Activated B cell treated with CpG ODN at 0.5 μM for 24 hours (primary cell): ENCODE measurements at regions of chr4 and their contacts with region 1.

Region 1: GRCh38 chr4:169566021-169566818 is 46.2 kb downstream of the NEK1 start:
- DNase-seq: no peak
- ATAC-seq: peak; percentile 40
- H3K4me3 Mint-ChIP-seq: no peak overlapping the region
- H3K27ac Mint-ChIP-seq: no peak overlapping the region
- H3K4me1 Mint-ChIP-seq: peaks cover 7% of the 10 kb centered on the region
- H3K27me3 Mint-ChIP-seq: no peaks in the 10 kb centered on the region
- CTCF ChIP-seq: peak; percentile 83

Region 2: DNA sequence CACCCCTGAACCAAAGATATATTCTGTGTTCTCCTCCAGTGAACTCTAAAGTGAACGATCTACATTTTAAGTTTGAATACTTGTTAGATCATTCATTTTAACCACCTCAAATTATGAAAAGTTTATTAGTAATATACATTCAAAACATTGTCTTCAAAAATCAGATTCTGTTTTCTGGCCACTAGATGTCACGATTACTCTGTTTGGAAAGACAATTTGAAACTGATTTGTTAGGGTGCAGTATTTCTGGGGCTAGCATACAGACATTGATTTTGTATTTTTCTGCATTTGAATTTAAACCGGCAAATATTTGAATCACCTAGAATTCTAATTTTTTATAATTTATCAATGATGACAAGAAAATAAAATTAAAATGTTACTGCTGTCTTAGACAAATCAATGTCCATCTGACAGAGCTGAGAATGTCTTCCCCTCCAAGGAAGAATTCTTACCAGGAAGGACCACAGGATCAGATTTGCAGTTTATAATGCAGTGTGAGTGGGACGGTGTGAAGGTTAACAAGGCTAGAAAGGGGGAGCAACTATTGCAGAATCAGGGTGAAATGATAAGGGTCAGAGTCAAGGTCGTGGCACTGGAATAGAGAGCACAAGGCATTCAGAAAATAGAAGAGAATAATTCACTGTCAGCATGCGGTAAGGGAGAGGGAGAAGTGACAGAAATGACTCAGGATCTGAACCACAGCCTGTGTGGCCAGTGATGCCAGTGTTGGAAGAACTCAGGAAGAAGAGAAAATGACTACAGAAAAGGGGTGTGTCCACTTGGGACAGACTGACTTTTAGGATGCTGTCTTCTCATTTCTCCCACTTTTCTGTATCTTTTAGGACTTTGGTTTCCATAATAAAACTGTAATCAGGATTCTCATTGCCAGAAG is 1382.3 kb before region 1 on chr4:
- CTCF ChIA-PET with region 1: no interaction called
- POLR2A ChIA-PET with region 1: no interaction called
- intact Hi-C with region 1: loop called (anchors 1 kb)
- DNase-seq: no peak
- ATAC-seq: no peak
- H3K4me3 Mint-ChIP-seq: no peak overlapping the region
- H3K27ac Mint-ChIP-seq: no peak overlapping the region
- H3K4me1 Mint-ChIP-seq: peaks cover 6% of the 10 kb centered on the region
- H3K27me3 Mint-ChIP-seq: no peaks in the 10 kb centered on the region
- CTCF ChIP-seq: no peak

Region 3: DNA sequence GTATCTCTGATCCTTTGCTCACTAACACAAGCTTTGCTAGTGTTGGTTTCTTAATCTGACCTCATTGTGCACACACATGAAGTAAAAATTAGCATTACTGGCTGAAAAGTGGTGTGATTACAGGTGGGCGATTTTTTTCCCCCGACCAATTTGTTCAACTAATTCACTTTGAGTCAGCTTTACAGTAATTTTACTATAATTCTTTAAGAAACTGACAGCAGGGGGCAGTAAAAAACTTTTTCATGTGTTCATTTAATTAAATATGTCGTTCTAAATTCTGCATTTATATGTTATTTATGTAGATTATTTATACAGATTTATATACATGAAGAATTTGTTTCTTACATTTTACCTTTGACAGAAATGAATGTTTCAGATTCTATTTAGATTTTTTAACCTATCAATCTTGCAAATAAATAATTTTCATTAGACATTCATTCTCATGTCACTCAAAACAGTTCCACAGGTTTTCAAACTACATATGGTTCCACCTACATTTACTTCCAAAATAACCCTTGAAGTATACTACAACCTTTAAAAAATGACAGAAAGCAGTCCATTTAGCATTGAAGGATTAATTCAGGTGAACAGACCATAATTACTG is 1051.9 kb before region 1 on chr4:
- CTCF ChIA-PET with region 1: interaction called, 5 read pairs
- POLR2A ChIA-PET with region 1: no interaction called
- intact Hi-C with region 1: loop called (anchors 1 kb)
- DNase-seq: no peak
- ATAC-seq: no peak
- H3K4me3 Mint-ChIP-seq: no peak overlapping the region
- H3K27ac Mint-ChIP-seq: no peak overlapping the region
- H3K4me1 Mint-ChIP-seq: no peaks in the 10 kb centered on the region
- H3K27me3 Mint-ChIP-seq: peaks cover 2% of the 10 kb centered on the region
- CTCF ChIP-seq: no peak

Region 4: DNA sequence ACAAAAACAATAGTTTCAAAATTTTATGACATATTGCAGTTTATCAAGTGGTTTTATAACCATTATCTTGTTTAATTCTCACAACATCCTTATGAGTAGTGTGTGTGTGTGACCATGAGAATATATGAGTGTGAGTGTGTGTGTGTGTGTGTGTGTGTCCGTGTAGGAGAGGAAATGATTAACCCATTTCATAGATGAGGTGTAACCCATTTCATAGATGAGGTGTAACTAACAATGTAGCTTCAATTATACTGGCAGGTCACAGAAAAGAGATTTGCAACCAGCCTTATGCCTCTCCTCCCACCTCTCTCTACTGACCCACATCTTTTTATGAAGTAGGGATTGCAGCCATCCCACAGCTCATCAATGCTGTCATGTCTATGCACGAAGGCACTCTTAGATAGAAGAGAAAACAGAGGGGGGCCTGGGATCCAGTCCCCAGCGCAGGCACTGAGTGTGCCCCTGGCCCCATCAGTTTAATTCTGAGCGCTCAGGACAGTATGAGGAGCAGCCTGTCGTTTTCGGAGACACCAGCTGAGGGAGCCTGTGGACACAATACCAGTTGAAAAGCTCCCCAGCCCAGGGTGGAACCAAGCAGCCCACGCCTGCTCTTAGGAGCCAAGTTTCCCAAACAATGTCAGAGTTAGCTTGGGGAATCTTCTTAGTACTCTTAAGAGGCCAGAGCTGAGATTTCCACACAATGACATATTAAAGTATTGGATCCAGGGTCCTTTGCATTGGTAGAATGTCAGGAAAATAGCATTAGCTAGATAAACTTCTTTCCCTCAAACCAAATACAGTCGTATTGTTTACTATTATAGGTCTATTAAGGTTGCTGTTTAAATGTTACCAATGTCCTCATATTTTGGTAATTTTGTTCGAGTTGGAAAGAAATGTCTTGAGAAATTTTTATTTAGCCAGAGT is 980.8 kb before region 1 on chr4:
- CTCF ChIA-PET with region 1: no interaction called
- POLR2A ChIA-PET with region 1: no interaction called
- intact Hi-C with region 1: loop called (anchors 2 kb)
- DNase-seq: no peak
- ATAC-seq: no peak
- H3K4me3 Mint-ChIP-seq: no peak overlapping the region
- H3K27ac Mint-ChIP-seq: no peak overlapping the region
- H3K4me1 Mint-ChIP-seq: no peaks in the 10 kb centered on the region
- H3K27me3 Mint-ChIP-seq: peaks cover 14% of the 10 kb centered on the region
- CTCF ChIP-seq: no peak

Region 5: DNA sequence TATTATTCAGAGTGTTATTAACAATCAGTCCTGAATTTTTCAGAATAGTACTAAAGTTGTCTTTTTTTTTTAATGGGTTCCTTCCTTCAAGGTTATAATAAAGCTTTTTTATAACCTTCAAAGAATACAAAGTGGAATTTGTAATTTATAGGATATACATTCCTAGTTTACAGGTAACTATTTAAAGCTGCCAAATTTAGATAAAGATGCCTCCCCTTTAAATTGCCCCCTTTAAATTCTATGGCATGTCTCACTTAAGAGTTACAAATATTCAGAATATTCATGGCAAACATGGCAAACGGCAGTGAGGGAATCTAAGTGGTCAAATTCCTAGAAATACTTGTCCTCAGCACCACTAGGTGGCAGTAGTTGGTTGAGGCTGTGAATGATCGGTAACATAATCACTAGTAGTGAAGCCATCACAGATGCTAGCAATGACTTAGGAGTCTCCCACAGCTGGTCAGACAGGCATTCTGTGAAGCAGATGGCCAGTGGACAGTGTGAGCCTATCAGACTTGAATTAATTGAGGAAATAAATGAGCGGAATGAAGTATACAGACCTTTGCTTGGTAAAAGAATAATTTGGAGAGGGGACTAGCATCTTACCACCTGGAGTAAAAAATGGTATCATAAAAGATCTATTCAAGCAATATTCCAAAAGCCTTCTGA is 642.6 kb before region 1 on chr4:
- CTCF ChIA-PET with region 1: interaction called, 39 read pairs
- POLR2A ChIA-PET with region 1: no interaction called
- intact Hi-C with region 1: loop called (anchors 1 kb)
- DNase-seq: no peak
- ATAC-seq: peak; percentile 54
- H3K4me3 Mint-ChIP-seq: no peak overlapping the region
- H3K27ac Mint-ChIP-seq: no peak overlapping the region
- H3K4me1 Mint-ChIP-seq: no peaks in the 10 kb centered on the region
- H3K27me3 Mint-ChIP-seq: no peaks in the 10 kb centered on the region
- CTCF ChIP-seq: peak; percentile 61

Region 6: GRCh38 chr4:168995537-168996295 is 570.5 kb before region 1 on chr4:
- CTCF ChIA-PET with region 1: no interaction called
- POLR2A ChIA-PET with region 1: no interaction called
- intact Hi-C with region 1: loop called (anchors 5 kb)
- DNase-seq: no peak
- ATAC-seq: no peak
- H3K4me3 Mint-ChIP-seq: no peak overlapping the region
- H3K27ac Mint-ChIP-seq: no peak overlapping the region
- H3K4me1 Mint-ChIP-seq: peaks cover 2% of the 10 kb centered on the region
- H3K27me3 Mint-ChIP-seq: no peaks in the 10 kb centered on the region
- CTCF ChIP-seq: no peak

Region 7: GRCh38 chr4:169024762-169025161 is 541.5 kb before region 1 on chr4:
- CTCF ChIA-PET with region 1: no interaction called
- POLR2A ChIA-PET with region 1: no interaction called
- intact Hi-C with region 1: loop called (anchors 1 kb)
- DNase-seq: no peak
- ATAC-seq: peak; percentile 50
- H3K4me3 Mint-ChIP-seq: no peak overlapping the region
- H3K27ac Mint-ChIP-seq: no peak overlapping the region
- H3K4me1 Mint-ChIP-seq: no peaks in the 10 kb centered on the region
- H3K27me3 Mint-ChIP-seq: peaks cover 3% of the 10 kb centered on the region
- CTCF ChIP-seq: no peak

Region 8: DNA sequence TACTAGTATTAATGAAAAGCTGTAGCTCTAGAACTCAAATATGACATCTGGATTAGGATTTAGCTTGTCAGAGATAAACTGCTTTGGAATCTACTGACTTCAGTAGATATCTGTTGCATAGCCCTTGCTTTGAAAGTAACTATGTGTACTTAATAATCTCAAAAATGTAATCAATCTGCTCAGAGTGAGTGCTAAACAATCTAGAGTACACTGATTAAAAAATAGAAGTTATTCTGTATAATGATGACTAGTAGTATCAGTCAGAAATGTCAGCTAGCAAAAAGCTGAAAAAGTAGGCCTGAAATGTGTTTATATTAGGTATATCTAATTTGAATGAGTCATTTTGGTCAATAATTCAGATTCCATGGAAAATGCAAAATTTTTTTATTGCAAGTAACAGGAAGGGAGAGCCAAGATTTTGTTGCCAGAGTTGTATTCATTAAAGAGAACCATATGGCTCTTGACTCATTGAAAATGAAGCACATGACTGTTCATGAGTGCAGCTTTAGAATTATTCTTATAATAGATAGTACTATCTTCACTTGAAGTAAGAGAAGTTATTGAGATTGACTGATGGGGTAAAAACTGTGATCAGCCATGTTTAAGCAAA is 74.1 kb after region 1 on chr4:
- CTCF ChIA-PET with region 1: no interaction called
- POLR2A ChIA-PET with region 1: no interaction called
- intact Hi-C with region 1: no loop called
- DNase-seq: no peak
- ATAC-seq: no peak
- H3K4me3 Mint-ChIP-seq: no peak overlapping the region
- H3K27ac Mint-ChIP-seq: no peak overlapping the region
- H3K4me1 Mint-ChIP-seq: no peaks in the 10 kb centered on the region
- H3K27me3 Mint-ChIP-seq: no peaks in the 10 kb centered on the region
- CTCF ChIP-seq: no peak